ENCODE measurements at regions of chr12 and their contacts with region 1.

Region 1: GRCh38 chr12:109597795-109598427 is 24.3 kb downstream of the MVK start:
- DNase-seq: peak; percentile 24 to 65 (median 48)
- ATAC-seq: peak; percentile 72
- H3K4me3 ChIP-seq: no peak overlapping the region
- H3K4me3 Mint-ChIP-seq: peak overlapping the region in 3 of 10 donors; percentile 2 to 32 (median 22)
- H3K27ac ChIP-seq: no peak overlapping the region
- H3K27ac Mint-ChIP-seq: peak overlapping the region in 1 of 9 donors; percentile 70
- H3K4me1 ChIP-seq: peaks cover 5 to 9% of the 10 kb centered on the region in 2 donors
- H3K4me1 Mint-ChIP-seq: peaks cover 8 to 32% (median 26%) of the 10 kb centered on the region in 7 donors
- H3K27me3 ChIP-seq: no peaks in the 10 kb centered on the region
- H3K27me3 Mint-ChIP-seq: peaks cover 0 to 2% (median 0%) of the 10 kb centered on the region in 5 donors

Region 2: DNA sequence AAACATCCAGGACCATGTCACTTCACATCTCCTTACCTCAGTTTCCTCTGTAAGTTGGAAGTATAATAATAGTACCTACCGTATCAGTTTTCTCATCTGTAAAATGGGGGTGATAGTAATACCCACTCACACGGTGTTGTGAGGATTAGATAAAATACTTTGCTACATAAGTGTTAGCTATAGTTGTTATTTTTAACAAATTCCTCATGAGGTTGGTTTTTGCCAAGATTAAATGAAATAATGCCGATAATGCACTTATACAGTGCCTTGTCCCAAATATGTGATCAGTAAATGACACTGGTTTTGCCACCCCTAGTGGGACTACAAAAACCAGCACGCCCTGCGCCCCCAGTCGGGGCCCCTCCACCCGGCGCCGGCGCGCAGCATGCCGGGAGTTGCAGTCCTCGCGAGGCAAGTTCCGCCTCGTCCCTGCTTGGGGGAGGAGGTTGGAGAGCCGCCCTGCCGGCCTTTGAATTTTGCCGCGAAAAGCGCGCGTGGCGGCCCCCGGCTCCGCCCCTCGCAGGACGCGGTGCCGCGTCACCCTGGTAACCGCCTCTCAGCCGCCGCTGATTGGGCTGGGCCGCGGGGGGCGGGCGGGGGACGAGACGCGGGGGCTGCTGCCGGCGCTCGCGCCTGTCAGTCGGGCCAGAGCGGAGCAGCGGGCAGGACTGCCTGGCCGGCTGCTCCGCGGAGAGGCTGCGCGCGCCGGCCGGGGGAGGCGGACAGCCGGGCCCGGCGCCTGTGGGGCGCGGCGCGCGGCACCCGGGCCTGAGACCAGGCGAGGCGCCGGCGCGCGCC is 115.5 kb after region 1 on chr12 and contains the start of gene FAM222A:
- CTCF ChIA-PET with region 1: interaction called, 3 read pairs
- POLR2A ChIA-PET with region 1: no interaction called
- intact Hi-C with region 1: loop called in 1 of 2 experiments (anchors 1 kb)
- DNase-seq: peak; percentile 94 to 99 (median 98)
- ATAC-seq: peak; percentile 94
- H3K4me3 ChIP-seq: peak within 1 kb of the TSS; percentile 41
- H3K4me3 Mint-ChIP-seq: peak within 1 kb of the TSS; percentile 57 to 81 (median 72)
- H3K27ac ChIP-seq: peak within 1 kb of the TSS; percentile 55
- H3K27ac Mint-ChIP-seq: peak within 1 kb of the TSS in 1 of 9 donors; percentile 48
- H3K4me1 ChIP-seq: peaks cover 3 to 11% of the 10 kb centered on the region in 2 donors
- H3K4me1 Mint-ChIP-seq: peaks cover 0 to 4% (median 0%) of the 10 kb centered on the region in 7 donors
- H3K27me3 ChIP-seq: peaks cover 0 to 6% of the 10 kb centered on the region in 2 donors
- H3K27me3 Mint-ChIP-seq: peaks cover 29 to 65% (median 30%) of the 10 kb centered on the region in 5 donors
- total RNA-seq, gene FAM222A: 0.24 to 1.6 (median 0.80) TPM

Region 3: GRCh38 chr12:109763201-109763841 is 165.4 kb after region 1 on chr12:
- CTCF ChIA-PET with region 1: no interaction called
- POLR2A ChIA-PET with region 1: no interaction called
- intact Hi-C with region 1: no loop called
- DNase-seq: peak in 1 of 9 donors; percentile 6
- ATAC-seq: peak; percentile 73
- H3K4me3 ChIP-seq: no peak overlapping the region
- H3K4me3 Mint-ChIP-seq: no peak overlapping the region
- H3K27ac ChIP-seq: no peak overlapping the region
- H3K27ac Mint-ChIP-seq: peak overlapping the region in 1 of 9 donors; percentile 41
- H3K4me1 ChIP-seq: no peaks in the 10 kb centered on the region
- H3K4me1 Mint-ChIP-seq: peaks cover 0 to 4% (median 0%) of the 10 kb centered on the region in 7 donors
- H3K27me3 ChIP-seq: no peaks in the 10 kb centered on the region
- H3K27me3 Mint-ChIP-seq: no peaks in the 10 kb centered on the region

Region 4: DNA sequence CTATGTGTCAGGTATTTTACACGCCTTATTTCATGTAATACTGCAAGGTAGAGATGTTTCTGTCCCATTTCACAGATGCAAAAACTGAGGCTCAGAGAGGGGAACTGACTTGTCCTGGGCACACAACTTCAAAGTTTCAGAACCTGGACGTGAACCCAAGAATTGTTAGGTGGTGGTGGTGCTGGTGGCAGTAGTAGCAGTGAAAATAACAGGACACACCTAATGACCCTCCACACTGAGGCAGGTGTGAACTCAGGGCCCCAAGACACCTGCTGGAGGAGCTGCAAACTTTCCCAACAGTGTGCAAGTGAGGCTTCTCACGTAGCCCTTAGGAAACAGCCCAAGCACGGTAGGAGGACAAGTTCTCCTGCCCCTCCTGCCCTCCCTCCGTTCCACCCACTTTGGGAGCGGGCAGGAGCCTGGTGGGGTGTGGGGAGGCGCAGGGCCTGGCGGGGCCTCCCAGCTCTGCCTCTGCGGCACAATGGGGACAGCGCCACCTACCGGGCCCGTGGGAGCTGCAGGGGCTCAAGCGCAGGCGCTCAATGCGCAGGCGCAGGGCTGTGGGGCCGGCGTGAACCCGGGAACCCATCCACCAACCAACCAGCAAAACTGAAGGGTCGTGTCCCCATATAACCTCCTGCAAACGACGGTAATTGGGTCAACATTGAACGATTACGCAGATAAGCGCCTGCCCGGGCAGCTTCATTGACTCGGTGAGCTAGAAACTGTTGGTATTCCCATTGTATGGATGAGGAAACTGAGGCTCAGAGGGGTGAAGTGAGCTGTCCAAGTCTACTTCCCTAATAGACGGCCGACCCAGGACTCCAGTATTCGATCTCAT is 247.3 kb after region 1 on chr12:
- CTCF ChIA-PET with region 1: interaction called, 4 read pairs
- POLR2A ChIA-PET with region 1: no interaction called
- intact Hi-C with region 1: loop called in 1 of 2 experiments (anchors 1 kb)
- DNase-seq: peak; percentile 65 to 97 (median 80)
- ATAC-seq: peak; percentile 97
- H3K4me3 ChIP-seq: no peak overlapping the region
- H3K4me3 Mint-ChIP-seq: peak overlapping the region in 5 of 10 donors; percentile 32 to 70 (median 51)
- H3K27ac ChIP-seq: no peak overlapping the region
- H3K27ac Mint-ChIP-seq: no peak overlapping the region
- H3K4me1 ChIP-seq: no peaks in the 10 kb centered on the region
- H3K4me1 Mint-ChIP-seq: peaks cover 0 to 10% (median 0%) of the 10 kb centered on the region in 7 donors
- H3K27me3 ChIP-seq: no peaks in the 10 kb centered on the region
- H3K27me3 Mint-ChIP-seq: no peaks in the 10 kb centered on the region